Ascending aorta (tissue), 2 donors: ENCODE measurements at regions of chr12 and their contacts with region 1.

Region 1: GRCh38 chr12:5473076-5473782 is 41.3 kb downstream of the NTF3 start:
- DNase-seq: no peak
- H3K4me3 ChIP-seq: no peak overlapping the region
- H3K27ac ChIP-seq: peak overlapping the region in 1 of 2 donors; percentile 32
- H3K4me1 ChIP-seq: peaks cover 7 to 19% of the 10 kb centered on the region in 2 donors
- H3K27me3 ChIP-seq: no peaks in the 10 kb centered on the region
- CTCF ChIP-seq: no peak

Region 2: GRCh38 chr12:5442251-5443006 is 30.8 kb before region 1 on chr12:
- intact Hi-C with region 1: loop called (anchors 5 kb)
- DNase-seq: peak in 1 of 2 donors; percentile 59
- H3K4me3 ChIP-seq: no peak overlapping the region
- H3K27ac ChIP-seq: no peak overlapping the region
- H3K4me1 ChIP-seq: peaks cover 2 to 19% of the 10 kb centered on the region in 2 donors
- H3K27me3 ChIP-seq: no peaks in the 10 kb centered on the region
- CTCF ChIP-seq: peak; percentile 44 to 71 (median 50)

Region 3: DNA sequence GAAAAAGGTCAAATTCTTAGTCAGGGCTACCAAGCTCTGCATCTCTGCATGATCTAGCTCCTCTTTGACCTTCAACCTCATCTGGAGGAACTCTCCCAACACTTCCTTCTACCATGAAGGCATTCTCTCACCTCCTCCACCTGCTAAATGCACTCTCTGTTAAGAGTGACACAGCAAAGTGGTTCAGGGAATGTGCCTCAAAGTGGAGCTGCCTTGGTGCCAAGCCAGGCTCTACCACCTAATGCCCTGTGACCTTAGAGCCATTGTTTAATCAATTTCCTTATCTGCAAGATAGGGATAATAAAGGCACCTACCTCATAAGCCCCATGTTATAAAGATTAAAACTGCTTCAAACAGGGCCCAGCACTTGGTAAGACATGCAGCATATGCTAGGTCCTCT is 235.1 kb after region 1 on chr12:
- intact Hi-C with region 1: no loop called
- DNase-seq: peak in 1 of 2 donors; percentile 8
- H3K4me3 ChIP-seq: no peak overlapping the region
- H3K27ac ChIP-seq: no peak overlapping the region
- H3K4me1 ChIP-seq: no peaks in the 10 kb centered on the region
- H3K27me3 ChIP-seq: no peaks in the 10 kb centered on the region
- CTCF ChIP-seq: no peak